ENCODE measurements at regions of chr18 and their contacts with region 1.

Region 1: GRCh38 chr18:12934454-12935071 is 13.2 kb upstream of the SEH1L start:
- DNase-seq: peak; percentile 86 to 94 (median 89)
- ATAC-seq: peak; percentile 91 to 93
- H3K4me3 ChIP-seq: no peak overlapping the region
- H3K27ac ChIP-seq: no peak overlapping the region
- H3K4me1 ChIP-seq: no peaks in the 10 kb centered on the region
- H3K27me3 ChIP-seq: no peaks in the 10 kb centered on the region

Region 2: DNA sequence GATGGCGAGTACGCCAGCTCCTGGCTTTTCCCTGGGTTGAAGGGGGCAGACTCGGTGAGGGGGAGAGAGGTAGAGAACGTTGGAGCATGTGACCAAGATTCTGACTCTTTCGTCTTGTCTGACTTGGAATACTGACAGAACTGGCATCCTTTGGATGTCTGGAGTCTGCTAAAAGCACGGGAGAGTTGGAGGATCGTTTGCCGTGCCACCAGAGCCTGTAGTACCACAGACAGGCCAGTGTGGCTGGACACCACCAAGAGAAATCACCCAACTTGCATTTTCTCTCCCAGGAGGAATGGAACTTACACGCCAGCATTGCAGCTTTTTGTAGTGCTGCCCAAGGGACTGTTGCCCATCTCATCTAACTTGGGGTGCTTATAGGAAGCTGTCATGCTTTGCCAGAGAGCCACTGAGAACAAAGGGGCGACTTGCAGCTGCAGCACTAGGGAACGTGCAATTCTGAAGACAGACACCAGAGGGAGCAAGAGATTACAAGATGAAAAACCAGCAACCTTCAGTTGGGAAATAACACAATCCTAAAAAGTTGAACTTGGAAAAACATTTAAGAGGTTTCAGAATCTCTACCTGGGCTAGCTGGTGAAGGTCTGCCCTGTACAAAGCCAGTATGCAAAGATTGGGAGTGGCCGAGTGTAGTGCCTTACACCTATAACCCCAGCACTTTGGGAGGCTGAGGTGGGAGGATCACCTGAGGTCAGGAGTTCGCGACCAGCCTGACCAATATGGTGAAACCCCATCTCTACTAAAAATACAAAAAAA is 207.6 kb before region 1 on chr18:
- intact Hi-C with region 1: loop called in 3 of 4 experiments (anchors 1 to 5 kb)
- DNase-seq: no peak
- ATAC-seq: peak; percentile 29 to 47
- H3K4me3 ChIP-seq: no peak overlapping the region
- H3K27ac ChIP-seq: no peak overlapping the region
- H3K4me1 ChIP-seq: no peaks in the 10 kb centered on the region
- H3K27me3 ChIP-seq: no peaks in the 10 kb centered on the region

Region 3: GRCh38 chr18:12744103-12744502 is 190.5 kb before region 1 on chr18:
- intact Hi-C with region 1: loop called in 3 of 4 experiments (anchors 5 kb)
- DNase-seq: no peak
- ATAC-seq: peak; percentile 57 to 62
- H3K4me3 ChIP-seq: no peak overlapping the region
- H3K27ac ChIP-seq: no peak overlapping the region
- H3K4me1 ChIP-seq: no peaks in the 10 kb centered on the region
- H3K27me3 ChIP-seq: no peaks in the 10 kb centered on the region